H1 (cell line): ENCODE measurements at regions of chr18 and their contacts with region 1.

Region 1: GRCh38 chr18:55850904-55851303 is 262.9 kb upstream of the TCF4 start:
- DNase-seq: no peak
- H3K4me3 ChIP-seq: no peak overlapping the region
- H3K27ac ChIP-seq: no peak overlapping the region
- H3K4me1 ChIP-seq: no peaks in the 10 kb centered on the region; a peak in 1 of 7 replicates
- H3K27me3 ChIP-seq: no peaks in the 10 kb centered on the region
- CTCF ChIP-seq: no peak
- EP300 ChIP-seq: no peak
- POLR2A ChIP-seq: no peak
- RAD21 ChIP-seq: no peak

Region 2: DNA sequence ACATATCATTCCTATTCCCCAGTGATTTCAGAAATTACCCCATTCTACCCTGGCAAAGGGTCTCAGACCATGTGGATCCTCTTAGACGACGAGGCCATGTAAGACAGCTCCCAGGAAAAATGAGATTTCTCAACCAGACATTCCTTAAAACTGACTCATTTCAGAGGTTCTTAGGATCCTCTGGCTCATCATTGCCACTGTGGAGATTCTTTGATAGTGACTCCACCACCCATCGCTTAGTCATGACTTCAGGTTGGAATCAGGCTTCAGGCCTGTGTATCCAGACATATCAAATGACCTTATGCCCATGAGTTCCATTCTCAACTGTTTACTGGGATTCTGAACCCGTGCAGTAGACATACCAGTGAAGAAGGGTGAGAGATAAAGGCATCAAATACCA is 17.4 kb before region 1 on chr18:
- CTCF ChIA-PET with region 1: no interaction called
- POLR2A ChIA-PET with region 1: no interaction called
- DNase-seq: no peak
- H3K4me3 ChIP-seq: no peak overlapping the region
- H3K27ac ChIP-seq: no peak overlapping the region
- H3K4me1 ChIP-seq: no peaks in the 10 kb centered on the region
- H3K27me3 ChIP-seq: no peaks in the 10 kb centered on the region
- CTCF ChIP-seq: no peak
- EP300 ChIP-seq: no peak
- POLR2A ChIP-seq: no peak
- RAD21 ChIP-seq: no peak

Region 3: DNA sequence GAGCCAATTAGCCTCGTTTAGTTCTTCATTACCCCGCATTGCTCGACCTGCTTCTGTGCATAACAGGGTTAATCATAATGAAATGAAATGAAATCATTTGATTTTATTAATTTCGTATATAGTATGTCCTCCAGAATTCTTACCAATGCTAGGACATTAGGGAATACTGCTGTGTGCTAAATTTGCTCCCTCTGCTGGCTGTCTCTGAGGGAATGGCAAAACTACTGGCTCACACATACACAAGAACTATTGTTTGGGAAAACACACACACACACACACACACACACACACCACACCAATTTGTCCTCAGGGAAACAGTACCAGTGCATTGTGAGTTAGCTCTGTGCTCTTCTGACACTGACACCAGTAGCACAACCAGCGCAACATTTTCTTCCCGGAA is 10.4 kb after region 1 on chr18:
- CTCF ChIA-PET with region 1: interaction called, 11 read pairs
- POLR2A ChIA-PET with region 1: interaction called, 3 read pairs
- DNase-seq: no peak
- H3K4me3 ChIP-seq: no peak overlapping the region
- H3K27ac ChIP-seq: no peak overlapping the region
- H3K4me1 ChIP-seq: peaks cover 2 to 21% (median 8%) of the 10 kb centered on the region in 4 experiments; a peak in 5 of 7 replicates
- H3K27me3 ChIP-seq: no peaks in the 10 kb centered on the region
- CTCF ChIP-seq: peak in 2 of 3 experiments; percentile 50 to 73; a peak in 2 of 4 replicates
- EP300 ChIP-seq: no peak
- POLR2A ChIP-seq: no peak
- RAD21 ChIP-seq: peak; percentile 49 to 59